Activated naive CD8-positive, alpha-beta T cell treated with anti-CD3 and anti-CD28 coated beads, Interleukin-2, amount 10 ng/mL, durations not matched to agents 7 days and 5 days (primary cell): ENCODE measurements at regions of chr2 and their contacts with region 1.

Region 1: GRCh38 chr2:230781130-230781797 is 68.6 kb downstream of the CAB39 start:
- DNase-seq: no peak
- ATAC-seq: peak; percentile 92
- H3K4me3 Mint-ChIP-seq: peak overlapping the region; percentile 9
- H3K27ac Mint-ChIP-seq: peak overlapping the region; percentile 78
- H3K4me1 Mint-ChIP-seq: peaks cover 67% of the 10 kb centered on the region
- H3K27me3 Mint-ChIP-seq: no peaks in the 10 kb centered on the region

Region 2: DNA sequence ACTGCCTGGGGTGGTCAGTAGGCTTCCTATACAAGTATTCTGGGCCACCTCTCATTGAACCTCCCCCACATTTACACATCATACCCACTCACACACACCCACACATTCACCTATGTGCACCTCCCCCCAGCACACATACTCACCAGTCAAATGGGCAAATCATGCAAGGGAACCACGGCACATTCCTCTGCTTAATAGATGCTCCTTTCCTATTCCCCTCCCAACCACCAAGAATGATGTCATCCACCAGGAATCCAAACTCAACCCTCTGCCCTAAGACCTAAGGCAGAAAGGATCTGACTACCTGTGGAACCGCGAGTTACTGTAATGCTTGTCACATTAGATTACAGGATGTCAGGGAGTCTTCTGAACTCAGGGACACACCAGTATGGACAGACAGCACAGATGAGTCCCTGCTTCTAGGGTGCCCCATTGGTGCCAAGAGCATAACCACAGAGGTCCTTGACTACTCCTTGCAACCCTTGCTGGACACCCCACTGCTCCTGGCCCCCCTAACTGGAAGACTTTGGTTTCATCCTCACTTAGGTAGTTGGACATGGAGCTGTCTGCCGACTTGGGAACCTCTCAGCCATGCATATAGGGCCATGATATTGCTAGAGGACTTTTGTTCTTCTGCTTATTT is 90.1 kb before region 1 on chr2:
- POLR2A ChIA-PET with region 1: no interaction called
- DNase-seq: no peak
- ATAC-seq: no peak
- H3K4me3 Mint-ChIP-seq: no peak overlapping the region
- H3K27ac Mint-ChIP-seq: peak overlapping the region; percentile 43
- H3K4me1 Mint-ChIP-seq: peaks cover 31% of the 10 kb centered on the region
- H3K27me3 Mint-ChIP-seq: no peaks in the 10 kb centered on the region

Region 3: GRCh38 chr2:230765611-230766300 is 15.5 kb before region 1 on chr2:
- POLR2A ChIA-PET with region 1: no interaction called
- DNase-seq: no peak
- ATAC-seq: no peak
- H3K4me3 Mint-ChIP-seq: no peak overlapping the region
- H3K27ac Mint-ChIP-seq: no peak overlapping the region
- H3K4me1 Mint-ChIP-seq: peaks cover 36% of the 10 kb centered on the region
- H3K27me3 Mint-ChIP-seq: no peaks in the 10 kb centered on the region

Region 4: DNA sequence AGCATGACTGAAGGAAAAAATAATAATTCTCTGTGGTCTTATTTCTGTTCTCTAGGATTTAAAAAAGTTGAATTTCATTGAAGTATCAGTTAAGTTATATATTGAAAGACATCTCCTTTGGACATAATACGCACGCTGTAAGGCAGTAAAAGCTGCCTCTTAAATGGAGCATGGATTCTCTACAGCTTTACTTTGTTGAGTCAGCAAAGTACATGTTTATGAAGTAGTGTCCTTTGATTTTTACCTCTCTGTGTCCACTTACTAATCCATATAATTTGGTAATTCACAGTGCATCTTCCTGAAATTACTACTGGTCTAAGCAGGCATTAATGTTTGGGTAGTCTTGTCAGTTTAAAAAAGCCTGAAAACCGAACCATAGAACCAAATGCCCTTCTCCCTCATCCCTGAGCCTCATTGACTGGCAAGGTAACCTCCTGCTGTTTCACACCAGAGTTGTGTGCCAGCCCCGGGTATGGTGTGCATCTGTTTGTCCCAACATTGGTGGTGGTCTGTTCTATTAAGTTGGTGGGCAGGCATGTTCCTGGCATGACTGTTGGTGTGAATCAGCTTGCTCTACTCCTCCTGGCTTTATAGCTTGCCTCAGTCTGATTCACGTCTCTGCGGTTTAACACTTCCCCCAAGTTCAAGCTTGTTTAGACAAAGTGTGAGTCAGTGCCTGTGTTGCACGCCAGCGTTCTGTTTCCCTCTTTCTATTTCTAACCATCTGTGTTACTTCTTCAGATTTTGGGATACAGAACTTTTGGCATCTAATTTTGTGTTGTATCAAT is 12.5 kb after region 1 on chr2:
- POLR2A ChIA-PET with region 1: interaction called, 16 read pairs
- DNase-seq: peak; percentile 49
- ATAC-seq: peak; percentile 86
- H3K4me3 Mint-ChIP-seq: peak overlapping the region; percentile 77
- H3K27ac Mint-ChIP-seq: peak overlapping the region; percentile 87
- H3K4me1 Mint-ChIP-seq: peaks cover 32% of the 10 kb centered on the region
- H3K27me3 Mint-ChIP-seq: no peaks in the 10 kb centered on the region

Region 5: GRCh38 chr2:230805353-230806017 is 24.2 kb after region 1 on chr2:
- POLR2A ChIA-PET with region 1: no interaction called
- DNase-seq: no peak
- ATAC-seq: no peak
- H3K4me3 Mint-ChIP-seq: no peak overlapping the region
- H3K27ac Mint-ChIP-seq: peak overlapping the region; percentile 1
- H3K4me1 Mint-ChIP-seq: peaks cover 13% of the 10 kb centered on the region
- H3K27me3 Mint-ChIP-seq: no peaks in the 10 kb centered on the region

Region 6: GRCh38 chr2:230956827-230957755 is 175.8 kb after region 1 on chr2:
- POLR2A ChIA-PET with region 1: no interaction called
- DNase-seq: peak; percentile 64
- ATAC-seq: peak; percentile 81
- H3K4me3 Mint-ChIP-seq: peak overlapping the region; percentile 87
- H3K27ac Mint-ChIP-seq: peak overlapping the region; percentile 97
- H3K4me1 Mint-ChIP-seq: peaks cover 38% of the 10 kb centered on the region
- H3K27me3 Mint-ChIP-seq: no peaks in the 10 kb centered on the region